Activated CD4-positive, alpha-beta T cell treated with anti-CD3 and anti-CD28 coated beads for 36 hours (primary cell): ENCODE measurements at regions of chr9 and their contacts with region 1.

Region 1: DNA sequence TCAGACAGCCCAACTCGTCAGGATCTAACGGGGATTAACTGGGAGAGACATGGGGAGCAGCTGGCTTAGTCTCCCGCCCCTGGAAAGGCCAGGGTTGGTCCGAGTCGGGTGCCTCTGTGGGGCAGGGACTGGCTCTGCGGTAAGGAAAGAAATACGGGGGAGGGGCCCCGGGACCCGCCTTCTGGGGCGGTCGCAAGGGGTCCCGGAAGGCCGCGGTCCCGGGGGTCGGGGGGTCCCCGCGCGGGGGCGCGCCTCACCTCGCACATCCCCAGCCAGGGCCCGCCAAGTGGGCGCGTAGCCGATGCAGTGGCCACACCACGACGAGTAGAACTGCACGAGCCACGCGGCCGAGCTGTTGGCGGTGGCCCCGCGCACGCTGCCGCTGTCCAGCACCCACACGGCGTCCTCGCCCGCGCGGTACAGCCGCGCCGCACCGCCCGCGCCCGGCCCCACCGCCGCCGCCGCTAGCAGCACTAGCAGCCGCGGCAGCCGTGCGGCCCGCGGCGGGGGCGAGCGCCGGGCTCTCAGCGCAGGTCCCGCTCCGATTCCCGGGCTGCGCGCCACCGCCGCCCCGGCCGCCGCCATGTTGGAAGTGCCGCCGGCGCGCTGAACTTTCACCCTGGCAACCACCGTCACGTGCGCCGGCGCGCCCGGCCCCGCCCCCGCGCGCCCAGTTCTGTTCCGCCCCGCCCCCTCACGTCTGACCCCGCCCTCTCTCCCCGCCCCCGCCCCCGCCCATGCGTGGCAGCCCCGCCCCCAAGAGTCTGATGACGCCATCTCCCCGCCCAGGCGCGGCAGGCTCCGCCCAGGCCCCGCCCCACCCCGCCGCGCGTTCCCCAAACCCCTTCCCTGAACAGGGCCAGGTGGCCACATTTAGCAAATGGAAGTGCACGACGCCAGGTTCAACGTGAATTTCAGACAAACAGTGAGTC is at the start of gene QSOX2:
- DNase-seq: peak; percentile 94
- ATAC-seq: peak; percentile 61
- H3K4me3 Mint-ChIP-seq: peak within 1 kb of the TSS; percentile 85
- H3K27ac Mint-ChIP-seq: peak within 1 kb of the TSS; percentile 95
- H3K4me1 Mint-ChIP-seq: peaks cover 28% of the 10 kb centered on the region
- H3K27me3 Mint-ChIP-seq: no peaks in the 10 kb centered on the region
- total RNA-seq, gene QSOX2: 18.1 to 21.2 TPM

Region 2: DNA sequence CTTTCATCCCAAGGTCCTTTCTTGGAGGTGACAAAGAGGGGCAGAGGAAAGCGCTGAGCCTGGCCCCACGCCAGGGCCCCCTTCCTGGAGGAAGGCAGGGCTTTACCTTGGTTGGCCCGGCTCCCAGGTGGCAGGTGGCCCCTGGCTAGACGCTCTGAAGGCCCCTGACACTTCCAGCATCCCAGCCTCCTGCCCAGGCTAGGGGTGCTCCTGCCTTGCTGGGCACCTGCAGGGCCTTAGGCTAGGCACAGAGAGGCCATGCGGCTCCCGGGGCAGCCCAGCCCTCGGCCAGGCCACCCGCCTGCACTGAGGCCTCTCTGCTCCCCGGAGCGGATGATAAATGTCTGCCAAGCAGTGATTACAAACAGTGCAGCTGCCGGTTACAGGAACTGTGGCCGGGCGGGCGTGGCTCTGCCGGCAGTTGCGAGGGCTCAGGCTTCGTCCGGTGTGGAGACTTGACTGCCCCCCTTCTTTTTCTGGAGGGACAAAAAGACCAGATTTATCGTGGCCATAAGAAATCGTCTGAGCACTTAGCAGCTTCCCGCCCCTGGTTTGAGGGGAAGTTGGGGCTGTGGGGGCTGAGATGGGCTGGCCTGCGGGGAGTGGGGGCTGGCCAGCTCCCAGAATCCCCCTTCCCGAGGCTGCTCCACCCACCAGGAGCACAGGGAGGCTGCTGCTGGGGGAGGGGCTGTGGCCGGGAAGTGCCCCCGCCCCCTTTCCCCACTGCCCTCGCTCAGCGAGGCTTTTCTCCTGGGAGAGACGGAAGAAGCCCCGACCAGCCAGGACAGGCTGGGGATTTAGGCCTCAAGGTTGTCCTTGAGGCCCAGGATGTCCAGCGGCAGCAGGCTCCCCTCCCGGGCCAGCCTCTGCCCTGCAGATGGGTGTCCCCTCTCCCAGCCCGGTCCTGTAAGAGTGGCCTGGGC is 252.7 kb before region 1 on chr9:
- CTCF ChIA-PET with region 1: no interaction called
- POLR2A ChIA-PET with region 1: no interaction called
- intact Hi-C with region 1: loop called in 1 of 2 experiments (anchors 1 kb)
- DNase-seq: peak; percentile 68
- ATAC-seq: peak; percentile 71
- H3K4me3 Mint-ChIP-seq: no peak overlapping the region
- H3K27ac Mint-ChIP-seq: no peak overlapping the region
- H3K4me1 Mint-ChIP-seq: peaks cover 17% of the 10 kb centered on the region
- H3K27me3 Mint-ChIP-seq: no peaks in the 10 kb centered on the region

Region 3: GRCh38 chr9:136204838-136205706 is 40.4 kb before region 1 on chr9 and contains the start of gene LHX3:
- CTCF ChIA-PET with region 1: no interaction called
- POLR2A ChIA-PET with region 1: no interaction called
- intact Hi-C with region 1: no loop called
- DNase-seq: peak; percentile 55
- ATAC-seq: peak; percentile 23
- H3K4me3 Mint-ChIP-seq: no peak within 1 kb of the TSS
- H3K27ac Mint-ChIP-seq: no peak within 1 kb of the TSS
- H3K4me1 Mint-ChIP-seq: no peaks in the 10 kb centered on the region
- H3K27me3 Mint-ChIP-seq: peaks cover 22% of the 10 kb centered on the region
- total RNA-seq, gene LHX3: not detected

Region 4: DNA sequence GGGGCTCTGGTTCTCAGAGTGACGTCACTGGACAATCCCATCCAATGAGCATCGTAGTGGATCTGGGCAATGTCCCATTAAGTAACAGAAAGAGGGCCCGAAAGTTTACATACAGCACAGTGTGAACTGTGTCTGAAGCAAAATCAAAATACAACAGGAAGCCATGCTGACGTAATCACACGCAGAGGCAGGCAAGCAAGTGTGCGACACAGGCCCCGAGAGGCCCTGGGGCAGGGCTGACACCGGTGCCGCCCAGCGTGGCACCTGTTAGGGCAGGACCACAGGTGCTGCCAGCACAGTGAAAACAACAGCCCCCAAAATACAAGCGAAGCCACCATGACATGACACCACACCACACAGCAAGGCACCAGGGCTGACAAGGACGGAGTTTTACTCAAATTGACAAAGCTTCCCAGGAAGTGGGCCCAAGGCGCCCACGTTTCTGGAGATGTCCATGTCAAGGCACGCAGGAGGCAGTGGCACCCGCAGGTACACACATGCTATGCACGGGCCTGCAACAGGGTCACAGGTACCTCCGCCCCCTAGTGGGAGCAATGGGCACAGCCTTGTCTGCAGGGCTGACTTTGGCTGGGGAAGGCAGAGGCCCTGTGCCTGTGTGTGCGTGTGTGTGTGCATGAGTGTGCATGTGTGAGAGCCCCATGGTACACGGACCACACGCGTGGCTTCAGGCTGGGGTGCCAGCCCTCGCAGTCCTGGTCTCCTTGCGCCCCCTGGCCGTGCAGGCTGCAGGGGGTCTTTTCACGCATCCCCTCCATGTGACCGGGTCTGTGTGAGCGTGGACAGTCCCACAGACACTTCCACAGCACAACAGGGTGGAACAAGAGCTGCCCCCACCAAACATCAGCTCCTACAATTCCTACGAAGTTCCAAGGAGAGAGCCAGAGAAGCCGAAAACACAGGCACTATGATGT is 19.5 kb before region 1 on chr9:
- CTCF ChIA-PET with region 1: no interaction called
- POLR2A ChIA-PET with region 1: interaction called, 3 read pairs
- intact Hi-C with region 1: loop called (anchors 2 kb)
- DNase-seq: peak; percentile 84
- ATAC-seq: peak; percentile 88
- H3K4me3 Mint-ChIP-seq: peak overlapping the region; percentile 24
- H3K27ac Mint-ChIP-seq: peak overlapping the region; percentile 44
- H3K4me1 Mint-ChIP-seq: peaks cover 20% of the 10 kb centered on the region
- H3K27me3 Mint-ChIP-seq: no peaks in the 10 kb centered on the region

Region 5: GRCh38 chr9:136267261-136268111 is 22.0 kb after region 1 on chr9:
- CTCF ChIA-PET with region 1: interaction called, 4 read pairs
- POLR2A ChIA-PET with region 1: no interaction called
- intact Hi-C with region 1: loop called (anchors 1 kb)
- DNase-seq: peak; percentile 92
- ATAC-seq: peak; percentile 99
- H3K4me3 Mint-ChIP-seq: peak overlapping the region; percentile 69
- H3K27ac Mint-ChIP-seq: peak overlapping the region; percentile 58
- H3K4me1 Mint-ChIP-seq: peaks cover 6% of the 10 kb centered on the region
- H3K27me3 Mint-ChIP-seq: no peaks in the 10 kb centered on the region

Region 6: DNA sequence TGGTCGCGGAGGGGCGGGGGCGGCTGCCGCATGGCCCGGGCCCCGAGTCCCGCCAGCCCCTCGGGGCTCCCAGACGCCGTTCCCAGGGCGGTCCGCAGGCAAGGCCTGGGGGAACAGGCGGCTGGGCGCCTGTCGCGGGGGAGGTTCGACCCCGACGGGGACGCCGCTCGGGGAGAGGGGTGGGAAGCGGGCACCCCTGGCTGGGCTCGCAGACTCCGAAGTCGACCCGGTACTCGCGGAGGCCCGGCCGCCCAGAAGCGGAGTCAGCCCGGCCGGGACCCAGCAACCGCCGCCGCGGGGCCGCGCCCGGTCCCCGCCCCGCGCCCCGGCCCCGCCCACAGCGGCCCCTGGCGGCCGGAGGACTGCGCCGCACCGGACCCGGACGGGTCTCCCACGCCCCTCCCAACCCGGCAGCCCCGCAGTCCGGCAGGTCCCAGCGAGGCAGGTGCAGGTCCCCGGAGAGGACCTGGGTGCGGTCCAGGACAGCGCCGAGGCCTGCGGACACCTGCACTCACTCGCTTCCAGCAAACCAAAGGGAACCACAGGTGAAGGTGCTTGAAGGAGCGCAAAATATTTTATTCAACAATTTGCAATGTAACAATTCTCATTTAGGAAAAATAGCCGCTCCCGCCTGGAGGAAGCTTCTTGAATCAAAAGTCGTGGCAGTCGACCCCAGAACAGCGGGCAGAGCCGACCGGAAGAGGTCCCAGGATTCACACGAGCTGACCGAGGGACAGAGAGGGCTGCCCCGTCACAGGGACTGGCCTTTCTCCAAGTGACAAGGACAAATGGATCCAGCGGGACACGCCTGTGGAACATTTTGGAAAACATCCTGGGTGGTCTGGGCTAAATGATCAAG is 194.3 kb after region 1 on chr9 and contains the start of gene INPP5E:
- CTCF ChIA-PET with region 1: no interaction called
- POLR2A ChIA-PET with region 1: no interaction called
- intact Hi-C with region 1: loop called in 1 of 2 experiments (anchors 1 kb)
- DNase-seq: peak; percentile 89
- ATAC-seq: peak; percentile 85
- H3K4me3 Mint-ChIP-seq: peak within 1 kb of the TSS; percentile 80
- H3K27ac Mint-ChIP-seq: no peak within 1 kb of the TSS
- H3K4me1 Mint-ChIP-seq: peaks cover 21% of the 10 kb centered on the region
- H3K27me3 Mint-ChIP-seq: no peaks in the 10 kb centered on the region
- total RNA-seq, gene INPP5E: 13.5 to 14.1 TPM

Region 7: DNA sequence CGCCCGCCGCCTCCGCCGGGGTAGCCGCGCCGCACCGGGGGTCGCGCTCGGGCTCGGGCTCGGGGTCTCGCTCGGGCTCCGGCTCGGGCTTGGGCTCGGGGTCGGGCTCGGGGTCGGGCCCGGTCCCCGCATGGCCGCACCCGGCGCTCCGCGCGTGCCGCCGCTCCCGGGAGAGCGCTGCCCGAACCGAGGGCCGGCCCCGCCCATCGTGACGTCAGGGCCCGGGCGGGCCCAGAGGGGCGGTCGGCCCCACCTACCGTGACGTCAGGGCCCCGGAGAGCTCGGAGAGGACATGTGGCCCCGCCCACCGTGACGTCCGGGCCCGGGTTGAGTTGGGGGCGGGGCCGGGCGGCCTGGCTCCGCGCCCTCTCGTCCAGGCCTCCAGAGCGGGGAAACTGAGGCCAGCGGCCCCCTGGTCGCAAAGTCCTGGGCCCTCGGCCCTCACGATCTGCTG is 1213.7 kb after region 1 on chr9 and contains the start of gene NSMF:
- CTCF ChIA-PET with region 1: no interaction called
- POLR2A ChIA-PET with region 1: no interaction called
- intact Hi-C with region 1: loop called in 1 of 2 experiments (anchors 10 kb)
- DNase-seq: peak; percentile 98
- ATAC-seq: peak; percentile 66
- H3K4me3 Mint-ChIP-seq: peak within 1 kb of the TSS; percentile 39
- H3K27ac Mint-ChIP-seq: peak within 1 kb of the TSS; percentile 78
- H3K4me1 Mint-ChIP-seq: peaks cover 33% of the 10 kb centered on the region
- H3K27me3 Mint-ChIP-seq: no peaks in the 10 kb centered on the region
- total RNA-seq, gene NSMF: 63.6 to 65.0 TPM